CD4-positive, alpha-beta T cell (primary cell): ENCODE measurements at regions of chr19 and their contacts with region 1.

Region 1: GRCh38 chr19:5904352-5905113 is at the start of gene VMAC:
- DNase-seq: peak; percentile 99 to 100 (median 100)
- ATAC-seq: peak; percentile 76
- H3K4me3 ChIP-seq: peak within 1 kb of the TSS; percentile 89
- H3K4me3 Mint-ChIP-seq: peak within 1 kb of the TSS; percentile 93
- H3K27ac ChIP-seq: peak within 1 kb of the TSS; percentile 91
- H3K27ac Mint-ChIP-seq: peak within 1 kb of the TSS; percentile 99
- H3K4me1 ChIP-seq: peaks cover 53% of the 10 kb centered on the region
- H3K4me1 Mint-ChIP-seq: peaks cover 35% of the 10 kb centered on the region
- H3K27me3 ChIP-seq: no peaks in the 10 kb centered on the region
- H3K27me3 Mint-ChIP-seq: no peaks in the 10 kb centered on the region
- CTCF ChIP-seq: no peak
- total RNA-seq, gene VMAC: 23.4 to 25.3 TPM

Region 2: DNA sequence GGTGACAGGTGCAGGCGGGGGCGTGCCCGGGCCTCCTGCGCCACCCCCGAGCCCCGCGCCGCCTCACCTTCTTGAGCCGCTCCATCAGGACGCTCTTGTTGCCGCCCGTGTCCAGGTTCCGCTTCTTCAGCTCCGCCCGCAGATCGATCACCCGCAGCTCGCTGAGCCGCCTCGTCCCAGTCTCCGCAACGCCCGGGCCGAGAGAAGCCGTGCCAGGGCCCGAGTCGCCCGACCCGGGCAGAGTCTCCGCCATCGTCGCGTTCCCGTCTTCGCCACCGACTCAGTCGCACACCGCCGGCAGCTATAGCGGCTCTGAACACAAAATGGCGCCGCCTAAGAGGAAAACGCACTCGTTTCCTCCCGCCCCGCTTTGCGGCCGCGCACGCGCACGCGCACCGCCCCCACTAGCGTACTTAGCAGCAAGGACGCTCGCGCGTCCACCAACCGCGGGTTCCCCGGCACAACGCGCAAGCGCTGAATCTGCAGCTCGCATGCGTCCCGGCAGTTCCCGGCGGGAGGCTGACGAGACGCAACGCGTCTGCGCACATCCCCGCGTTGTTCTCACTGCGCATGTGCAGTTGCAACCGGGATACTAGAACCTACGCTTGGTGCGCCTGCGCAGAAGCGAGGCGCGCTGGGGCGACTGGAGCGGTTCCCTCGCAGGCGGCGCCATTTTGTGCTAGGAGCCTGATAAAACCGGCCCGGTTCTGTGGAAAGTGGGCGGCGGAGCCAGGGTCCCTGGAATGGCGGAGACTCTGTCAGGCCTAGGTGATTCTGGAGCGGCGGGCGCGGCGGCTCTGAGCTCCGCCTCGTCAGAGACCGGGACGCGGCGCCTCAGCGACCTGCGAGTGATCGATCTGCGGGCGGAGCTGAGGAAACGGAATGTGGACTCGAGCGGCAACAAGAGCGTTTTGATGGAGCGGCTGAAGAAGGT is 281.8 kb before region 1 on chr19 and contains the starts of genes SAFB and SAFB2:
- CTCF ChIA-PET with region 1: no interaction called
- POLR2A ChIA-PET with region 1: interaction called, 19 read pairs
- intact Hi-C with region 1: no loop called
- DNase-seq: peak; percentile 98 to 100 (median 100)
- ATAC-seq: peak; percentile 79
- H3K4me3 ChIP-seq: peak within 1 kb of the TSS; percentile 85
- H3K4me3 Mint-ChIP-seq: peak within 1 kb of the TSS; percentile 99
- H3K27ac ChIP-seq: peak within 1 kb of the TSS; percentile 90 to 95
- H3K27ac Mint-ChIP-seq: peak within 1 kb of the TSS; percentile 98
- H3K4me1 ChIP-seq: peaks cover 79% of the 10 kb centered on the region
- H3K4me1 Mint-ChIP-seq: peaks cover 84% of the 10 kb centered on the region
- H3K27me3 ChIP-seq: no peaks in the 10 kb centered on the region
- H3K27me3 Mint-ChIP-seq: no peaks in the 10 kb centered on the region
- CTCF ChIP-seq: no peak
- total RNA-seq, gene SAFB: 195 to 200 TPM
- total RNA-seq, gene SAFB2: 238 to 246 TPM

Region 3: DNA sequence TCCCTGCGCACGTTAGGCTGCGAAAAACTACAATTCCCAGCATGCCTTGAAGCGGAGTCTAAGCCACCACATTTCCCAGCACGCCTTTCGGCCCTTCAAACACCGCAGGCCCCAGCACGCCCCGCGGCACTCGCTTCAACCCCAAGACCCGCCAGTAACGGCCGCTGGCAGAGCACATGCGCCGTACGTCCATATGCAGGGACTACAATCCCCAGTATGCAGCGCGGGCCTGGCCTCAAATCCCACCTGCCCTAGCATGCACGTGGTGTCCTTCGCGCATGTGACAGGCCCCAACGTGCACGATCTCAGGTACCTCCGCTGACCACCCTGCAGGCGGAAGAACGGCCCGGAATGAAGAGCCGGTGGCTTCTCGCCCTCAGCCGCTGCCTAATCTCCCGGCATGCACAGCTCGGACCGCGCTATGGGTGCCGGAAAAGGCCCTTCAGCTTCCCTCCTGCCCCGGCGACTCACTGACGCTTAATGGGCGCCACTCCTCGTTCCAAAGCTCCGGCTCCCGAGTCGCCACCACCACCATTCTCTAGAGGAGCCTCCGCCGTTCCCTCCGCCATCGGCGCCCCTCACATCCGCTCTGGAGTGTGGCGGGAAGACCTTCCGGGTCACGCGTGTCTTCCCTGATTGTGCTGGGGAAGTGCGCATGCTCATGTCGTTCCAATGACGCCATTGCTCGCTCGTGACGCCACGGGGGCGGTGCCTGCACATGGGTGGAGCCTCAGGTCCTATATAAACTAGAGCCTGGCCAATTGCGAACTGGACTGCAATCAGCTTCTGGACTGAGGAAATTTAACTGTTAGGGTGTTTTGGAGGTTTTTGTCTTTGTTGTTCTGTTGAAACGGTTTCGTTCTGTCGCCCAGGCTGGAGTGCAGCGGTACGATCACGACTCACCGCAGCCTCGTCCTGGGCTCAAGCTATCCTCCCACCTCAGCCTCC is 113.7 kb before region 1 on chr19 and contains the start of gene DUS3L:
- CTCF ChIA-PET with region 1: no interaction called
- POLR2A ChIA-PET with region 1: interaction called, 23 read pairs
- intact Hi-C with region 1: loop called in 1 of 2 experiments (anchors 5 kb)
- DNase-seq: peak; percentile 91 to 99 (median 94)
- ATAC-seq: peak; percentile 93
- H3K4me3 ChIP-seq: peak within 1 kb of the TSS; percentile 69
- H3K4me3 Mint-ChIP-seq: peak within 1 kb of the TSS; percentile 96
- H3K27ac ChIP-seq: peak within 1 kb of the TSS; percentile 96 to 97
- H3K27ac Mint-ChIP-seq: peak within 1 kb of the TSS; percentile 97
- H3K4me1 ChIP-seq: peaks cover 26% of the 10 kb centered on the region
- H3K4me1 Mint-ChIP-seq: peaks cover 15% of the 10 kb centered on the region
- H3K27me3 ChIP-seq: no peaks in the 10 kb centered on the region
- H3K27me3 Mint-ChIP-seq: no peaks in the 10 kb centered on the region
- CTCF ChIP-seq: no peak
- total RNA-seq, gene DUS3L: 150 to 170 TPM

Region 4: DNA sequence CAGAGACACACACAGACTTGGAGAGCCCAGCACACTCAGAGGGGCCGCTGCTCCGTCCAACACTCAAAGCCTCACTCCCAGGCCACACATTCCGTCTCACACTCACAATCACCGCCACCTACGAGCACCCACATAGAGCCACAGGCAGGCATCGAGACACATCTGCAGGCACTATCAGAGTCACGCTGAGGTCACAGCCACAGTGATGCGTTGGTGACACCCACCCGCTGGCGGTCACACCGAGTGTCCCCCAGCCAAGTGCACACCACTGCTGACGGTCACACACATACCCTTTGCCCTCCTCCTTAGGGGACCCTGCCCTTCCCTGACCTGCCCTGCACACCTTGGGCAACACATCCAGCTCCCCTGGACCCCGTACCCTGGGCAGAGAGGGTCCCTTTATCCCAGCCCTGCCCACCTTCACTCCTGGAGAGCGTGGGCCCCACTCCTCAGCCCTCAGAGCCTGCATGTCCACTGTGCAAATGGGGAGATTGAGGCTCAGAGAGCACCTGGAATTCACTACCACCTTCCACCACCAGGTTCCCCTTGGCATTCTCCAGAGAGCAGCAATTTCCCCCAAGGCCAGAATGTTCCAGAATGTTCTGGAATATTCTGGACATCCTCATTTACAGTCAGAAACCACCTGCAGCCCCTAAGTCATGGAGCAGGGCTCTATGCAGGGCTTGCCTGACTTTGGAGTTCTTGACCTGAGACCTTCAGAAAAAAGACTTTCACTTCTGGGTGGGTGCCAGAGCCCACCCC is 39.6 kb before region 1 on chr19:
- CTCF ChIA-PET with region 1: no interaction called
- POLR2A ChIA-PET with region 1: no interaction called
- intact Hi-C with region 1: no loop called
- DNase-seq: no peak
- ATAC-seq: no peak
- H3K4me3 ChIP-seq: no peak overlapping the region
- H3K4me3 Mint-ChIP-seq: no peak overlapping the region
- H3K27ac ChIP-seq: no peak overlapping the region
- H3K27ac Mint-ChIP-seq: no peak overlapping the region
- H3K4me1 ChIP-seq: no peaks in the 10 kb centered on the region
- H3K4me1 Mint-ChIP-seq: no peaks in the 10 kb centered on the region
- H3K27me3 ChIP-seq: no peaks in the 10 kb centered on the region
- H3K27me3 Mint-ChIP-seq: peaks cover 12% of the 10 kb centered on the region
- CTCF ChIP-seq: no peak

Region 5: GRCh38 chr19:5891938-5892771 is 12.4 kb before region 1 on chr19:
- CTCF ChIA-PET with region 1: no interaction called
- POLR2A ChIA-PET with region 1: interaction called, 10 read pairs
- intact Hi-C with region 1: no loop called
- DNase-seq: peak in 6 of 14 experiments; percentile 10 to 46 (median 24)
- ATAC-seq: peak; percentile 41
- H3K4me3 ChIP-seq: no peak overlapping the region
- H3K4me3 Mint-ChIP-seq: peak overlapping the region; percentile 7
- H3K27ac ChIP-seq: no peak overlapping the region
- H3K27ac Mint-ChIP-seq: no peak overlapping the region
- H3K4me1 ChIP-seq: peaks cover 10% of the 10 kb centered on the region
- H3K4me1 Mint-ChIP-seq: no peaks in the 10 kb centered on the region
- H3K27me3 ChIP-seq: no peaks in the 10 kb centered on the region
- H3K27me3 Mint-ChIP-seq: peaks cover 12% of the 10 kb centered on the region
- CTCF ChIP-seq: peak; percentile 41

Region 6: DNA sequence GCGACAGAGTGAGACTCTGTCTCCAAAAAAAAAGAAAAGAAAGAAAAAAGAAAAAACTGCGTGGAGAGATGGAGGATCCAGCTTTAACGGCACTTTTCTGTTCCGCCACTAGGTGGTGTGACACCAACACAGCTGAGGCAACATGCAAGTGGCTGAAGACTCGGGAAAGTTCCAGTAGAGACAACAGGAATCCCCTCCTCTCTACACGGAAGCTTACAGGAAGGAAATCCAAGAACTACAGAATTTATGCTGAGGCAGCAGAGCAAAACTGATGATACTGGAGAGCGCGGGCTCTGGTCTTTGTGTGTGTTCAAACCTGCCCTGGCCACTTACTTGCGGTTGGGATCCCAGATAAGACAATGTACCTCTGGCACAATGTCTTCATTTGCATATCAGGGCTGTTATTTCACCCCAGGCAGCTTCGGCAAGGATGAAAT is 63.5 kb after region 1 on chr19:
- CTCF ChIA-PET with region 1: interaction called, 11 read pairs
- POLR2A ChIA-PET with region 1: interaction called, 12 read pairs
- intact Hi-C with region 1: loop called in 1 of 2 experiments (anchors 5 kb)
- DNase-seq: peak; percentile 42 to 83 (median 50)
- ATAC-seq: peak; percentile 78
- H3K4me3 ChIP-seq: no peak overlapping the region
- H3K4me3 Mint-ChIP-seq: peak overlapping the region; percentile 40
- H3K27ac ChIP-seq: peak overlapping the region in 1 of 2 donors; percentile 22
- H3K27ac Mint-ChIP-seq: peak overlapping the region; percentile 98
- H3K4me1 ChIP-seq: peaks cover 81% of the 10 kb centered on the region
- H3K4me1 Mint-ChIP-seq: peaks cover 93% of the 10 kb centered on the region
- H3K27me3 ChIP-seq: no peaks in the 10 kb centered on the region
- H3K27me3 Mint-ChIP-seq: no peaks in the 10 kb centered on the region
- CTCF ChIP-seq: peak; percentile 93

Region 7: DNA sequence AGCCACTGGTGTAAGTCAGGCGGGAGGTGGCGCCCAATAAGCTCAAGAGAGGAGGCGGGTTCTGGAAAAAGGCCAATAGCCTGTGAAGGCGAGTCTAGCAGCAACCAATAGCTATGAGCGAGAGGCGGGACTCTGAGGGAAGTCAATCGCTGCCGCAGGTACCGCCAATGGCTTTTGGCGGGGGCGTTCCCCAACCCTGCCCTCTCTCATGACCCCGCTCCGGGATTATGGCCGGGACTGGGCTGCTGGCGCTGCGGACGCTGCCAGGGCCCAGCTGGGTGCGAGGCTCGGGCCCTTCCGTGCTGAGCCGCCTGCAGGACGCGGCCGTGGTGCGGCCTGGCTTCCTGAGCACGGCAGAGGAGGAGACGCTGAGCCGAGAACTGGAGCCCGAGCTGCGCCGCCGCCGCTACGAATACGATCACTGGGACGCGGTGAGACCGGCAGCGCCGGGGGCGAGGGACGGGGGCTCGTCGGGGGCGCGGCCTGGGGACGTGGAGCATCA is 468.1 kb after region 1 on chr19 and contains the start of gene ALKBH7:
- CTCF ChIA-PET with region 1: no interaction called
- POLR2A ChIA-PET with region 1: no interaction called
- intact Hi-C with region 1: loop called in 1 of 2 experiments (anchors 10 kb)
- DNase-seq: peak; percentile 89 to 100 (median 96)
- ATAC-seq: peak; percentile 75
- H3K4me3 ChIP-seq: peak within 1 kb of the TSS; percentile 66
- H3K4me3 Mint-ChIP-seq: peak within 1 kb of the TSS; percentile 96
- H3K27ac ChIP-seq: peak within 1 kb of the TSS; percentile 84 to 87
- H3K27ac Mint-ChIP-seq: peak within 1 kb of the TSS; percentile 89
- H3K4me1 ChIP-seq: peaks cover 18% of the 10 kb centered on the region
- H3K4me1 Mint-ChIP-seq: peaks cover 19% of the 10 kb centered on the region
- H3K27me3 ChIP-seq: no peaks in the 10 kb centered on the region
- H3K27me3 Mint-ChIP-seq: no peaks in the 10 kb centered on the region
- CTCF ChIP-seq: no peak
- total RNA-seq, gene ALKBH7: 75.3 to 78.7 TPM

Region 8: GRCh38 chr19:6450166-6450565 is 545.6 kb after region 1 on chr19:
- CTCF ChIA-PET with region 1: no interaction called
- POLR2A ChIA-PET with region 1: no interaction called
- intact Hi-C with region 1: no loop called
- DNase-seq: no peak
- ATAC-seq: no peak
- H3K4me3 ChIP-seq: no peak overlapping the region
- H3K4me3 Mint-ChIP-seq: no peak overlapping the region
- H3K27ac ChIP-seq: no peak overlapping the region
- H3K27ac Mint-ChIP-seq: no peak overlapping the region
- H3K4me1 ChIP-seq: no peaks in the 10 kb centered on the region
- H3K4me1 Mint-ChIP-seq: no peaks in the 10 kb centered on the region
- H3K27me3 ChIP-seq: no peaks in the 10 kb centered on the region
- H3K27me3 Mint-ChIP-seq: no peaks in the 10 kb centered on the region
- CTCF ChIP-seq: no peak